Vagina (tissue), 2 donors: ENCODE measurements at regions of chr20 and their contacts with region 1.

Region 1: GRCh38 chr20:32465092-32465900 is 107.2 kb downstream of the ASXL1 start:
- DNase-seq: no peak
- H3K4me3 ChIP-seq: no peak overlapping the region
- H3K27ac ChIP-seq: peak overlapping the region; percentile 29
- H3K4me1 ChIP-seq: peaks cover 49% of the 10 kb centered on the region
- H3K27me3 ChIP-seq: no peaks in the 10 kb centered on the region
- CTCF ChIP-seq: no peak
- POLR2A ChIP-seq: no peak

Region 2: GRCh38 chr20:32209850-32210605 is 255.3 kb before region 1 on chr20:
- intact Hi-C with region 1: loop called (anchors 10 kb)
- DNase-seq: no peak
- H3K4me3 ChIP-seq: no peak overlapping the region
- H3K27ac ChIP-seq: no peak overlapping the region
- H3K4me1 ChIP-seq: peaks cover 41% of the 10 kb centered on the region
- H3K27me3 ChIP-seq: no peaks in the 10 kb centered on the region
- CTCF ChIP-seq: no peak
- POLR2A ChIP-seq: no peak

Region 3: GRCh38 chr20:32605167-32605656 is 139.9 kb after region 1 on chr20:
- intact Hi-C with region 1: no loop called
- DNase-seq: no peak
- H3K4me3 ChIP-seq: no peak overlapping the region
- H3K27ac ChIP-seq: no peak overlapping the region
- H3K4me1 ChIP-seq: no peaks in the 10 kb centered on the region
- H3K27me3 ChIP-seq: no peaks in the 10 kb centered on the region
- CTCF ChIP-seq: no peak
- POLR2A ChIP-seq: no peak

Region 4: GRCh38 chr20:32920066-32920465 is 454.8 kb after region 1 on chr20:
- intact Hi-C with region 1: no loop called
- DNase-seq: peak in 1 of 2 donors; percentile 34
- H3K4me3 ChIP-seq: no peak overlapping the region
- H3K27ac ChIP-seq: no peak overlapping the region
- H3K4me1 ChIP-seq: no peaks in the 10 kb centered on the region
- H3K27me3 ChIP-seq: no peaks in the 10 kb centered on the region
- CTCF ChIP-seq: no peak
- POLR2A ChIP-seq: no peak